Sigmoid colon (tissue), 7 donors: ENCODE measurements at regions of chr11 and their contacts with region 1.

Region 1: DNA sequence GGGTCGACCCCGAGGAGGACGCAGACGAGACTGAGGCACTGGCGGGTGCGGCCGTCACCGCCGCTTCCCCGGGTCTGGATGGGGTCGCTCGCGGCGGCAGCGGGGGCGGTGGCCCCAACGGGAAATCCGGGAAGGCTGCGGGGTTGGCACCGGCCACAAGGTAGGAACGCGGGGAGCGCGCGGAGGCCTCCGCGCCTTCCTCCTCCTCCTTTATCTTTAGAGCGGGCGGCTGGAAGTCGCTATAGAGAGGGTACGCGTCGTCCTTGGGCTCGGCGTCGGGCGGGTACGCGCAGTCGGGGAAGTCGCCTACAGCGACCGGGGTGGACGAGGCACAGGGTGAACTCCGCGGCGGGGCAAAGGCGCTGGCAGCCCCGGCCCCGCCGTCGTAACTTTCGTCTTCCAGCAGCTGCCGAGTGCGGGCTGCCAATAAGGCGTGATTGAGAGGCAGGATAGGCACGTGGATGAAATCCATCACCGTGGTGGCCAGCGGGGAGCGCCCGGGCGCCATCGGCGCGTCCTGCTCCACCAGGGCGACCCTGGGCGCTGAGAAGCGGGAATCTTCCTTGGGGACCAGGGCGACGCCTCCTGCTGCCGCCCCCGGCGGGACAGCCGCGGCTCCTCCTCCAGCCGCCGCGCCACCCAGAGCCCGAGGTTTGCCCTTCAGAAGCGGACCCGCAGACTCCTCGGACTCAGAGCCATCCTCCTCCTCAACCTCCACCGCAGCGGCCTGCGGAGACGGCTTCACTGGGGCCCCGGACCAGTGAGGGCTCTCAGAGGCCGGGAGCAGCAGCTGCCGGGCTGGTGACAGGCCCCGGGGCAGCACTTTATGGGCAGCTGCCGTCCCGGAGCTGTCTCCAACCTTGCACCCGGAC is 1.7 kb downstream of the PGR start:
- DNase-seq: peak; percentile 71
- H3K4me3 ChIP-seq: peak overlapping the region; percentile 62 to 79 (median 73)
- H3K27ac ChIP-seq: peak overlapping the region; percentile 78 to 86 (median 80)
- H3K4me1 ChIP-seq: peaks cover 0 to 29% (median 17%) of the 10 kb centered on the region in 4 donors
- H3K27me3 ChIP-seq: peaks cover 0 to 18% (median 0%) of the 10 kb centered on the region in 3 donors
- CTCF ChIP-seq: no peak
- EP300 ChIP-seq: no peak
- POLR2A ChIP-seq: no peak

Region 2: DNA sequence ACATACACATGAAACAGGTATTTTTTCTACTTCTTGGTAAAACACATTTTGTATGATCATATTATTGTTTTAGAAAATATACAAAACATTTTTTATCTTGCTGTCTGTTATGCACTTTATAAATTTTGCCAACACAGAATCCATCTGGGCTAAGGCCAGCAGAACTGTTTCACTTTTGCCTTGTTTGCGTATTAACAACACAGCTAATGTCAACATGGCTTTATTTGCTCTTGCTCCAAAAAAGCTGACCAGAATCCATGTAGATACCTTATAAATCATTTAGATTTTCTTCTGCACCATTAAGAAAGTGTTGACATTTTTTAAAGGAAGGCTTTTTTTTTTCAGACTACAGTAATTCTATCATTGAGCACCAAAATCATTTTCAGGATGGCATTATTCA is 59.8 kb after region 1 on chr11:
- intact Hi-C with region 1: loop called (anchors 10 kb)
- DNase-seq: no peak
- H3K4me3 ChIP-seq: no peak overlapping the region
- H3K27ac ChIP-seq: peak overlapping the region in 3 of 4 donors; percentile 16 to 66 (median 56)
- H3K4me1 ChIP-seq: peaks cover 0 to 23% (median 21%) of the 10 kb centered on the region in 4 donors
- H3K27me3 ChIP-seq: no peaks in the 10 kb centered on the region
- CTCF ChIP-seq: no peak
- EP300 ChIP-seq: no peak
- POLR2A ChIP-seq: no peak

Region 3: GRCh38 chr11:101407324-101407723 is 279.4 kb after region 1 on chr11:
- intact Hi-C with region 1: loop called (anchors 10 kb)
- DNase-seq: peak; percentile 69
- H3K4me3 ChIP-seq: peak overlapping the region in 3 of 4 donors; percentile 15 to 20 (median 20)
- H3K27ac ChIP-seq: peak overlapping the region; percentile 59 to 83 (median 74)
- H3K4me1 ChIP-seq: peaks cover 0 to 32% (median 22%) of the 10 kb centered on the region in 4 donors
- H3K27me3 ChIP-seq: no peaks in the 10 kb centered on the region
- CTCF ChIP-seq: no peak
- EP300 ChIP-seq: no peak
- POLR2A ChIP-seq: no peak

Region 4: DNA sequence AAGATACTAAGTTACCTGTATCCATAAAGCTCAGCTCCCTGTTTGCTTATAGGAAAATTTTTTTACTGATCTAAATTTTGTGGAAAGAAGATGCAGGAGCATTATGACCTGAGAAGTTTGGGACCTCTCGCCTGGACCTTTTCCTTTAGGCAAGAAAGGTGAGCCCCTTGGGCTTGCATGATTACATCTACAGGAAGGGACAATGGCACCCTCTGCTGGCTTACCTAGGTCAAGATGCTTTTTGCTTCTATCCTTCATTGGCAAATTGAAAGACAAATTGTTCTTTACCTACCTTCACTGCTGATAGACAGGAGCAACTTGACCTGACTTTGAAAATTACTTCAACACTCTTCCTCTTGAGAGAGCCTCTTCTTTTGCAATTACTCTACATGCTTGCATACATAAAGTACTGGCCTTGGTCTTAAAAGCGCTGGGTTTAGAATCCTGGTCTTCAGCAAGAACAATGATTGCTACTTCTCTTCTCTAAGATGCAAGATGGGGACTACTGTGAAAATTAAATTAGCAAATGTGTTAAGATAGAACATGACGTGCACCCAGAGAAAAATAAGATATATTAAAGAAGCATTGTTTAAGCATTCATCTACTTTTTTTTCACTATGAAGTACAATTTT is 308.7 kb after region 1 on chr11:
- intact Hi-C with region 1: loop called (anchors 10 kb)
- DNase-seq: no peak
- H3K4me3 ChIP-seq: no peak overlapping the region
- H3K27ac ChIP-seq: no peak overlapping the region
- H3K4me1 ChIP-seq: peaks cover 0 to 17% (median 14%) of the 10 kb centered on the region in 4 donors
- H3K27me3 ChIP-seq: no peaks in the 10 kb centered on the region
- CTCF ChIP-seq: peak; percentile 27 to 70 (median 55)
- EP300 ChIP-seq: no peak
- POLR2A ChIP-seq: no peak

Region 5: GRCh38 chr11:101583251-101584128 is 455.6 kb after region 1 on chr11 and contains the start of gene TRPC6:
- intact Hi-C with region 1: loop called (anchors 10 kb)
- DNase-seq: peak; percentile 83
- H3K4me3 ChIP-seq: peak within 1 kb of the TSS; percentile 61 to 84 (median 75)
- H3K27ac ChIP-seq: peak within 1 kb of the TSS; percentile 89 to 91 (median 90)
- H3K4me1 ChIP-seq: peaks cover 0 to 18% (median 9%) of the 10 kb centered on the region in 4 donors
- H3K27me3 ChIP-seq: no peaks in the 10 kb centered on the region
- CTCF ChIP-seq: no peak
- EP300 ChIP-seq: no peak
- POLR2A ChIP-seq: peak in 1 of 2 donors; percentile 34
- total RNA-seq, gene TRPC6: 3.6 to 14.3 (median 9.7) TPM